Activated CD8-positive, alpha-beta memory T cell treated with anti-CD3 and anti-CD28 coated beads, Interleukin-2, amount 10 ng/mL, durations not matched to agents 7 days and 5 days (primary cell): ENCODE measurements at regions of chr12 and their contacts with region 1.

Region 1: GRCh38 chr12:4027412-4027811 is 154.2 kb upstream of the PARP11 start:
- DNase-seq: peak; percentile 72
- ATAC-seq: peak; percentile 44
- H3K4me3 Mint-ChIP-seq: no peak overlapping the region
- H3K27ac Mint-ChIP-seq: peak overlapping the region; percentile 31
- H3K4me1 Mint-ChIP-seq: peaks cover 29% of the 10 kb centered on the region
- H3K27me3 Mint-ChIP-seq: peaks cover 13% of the 10 kb centered on the region

Region 2: DNA sequence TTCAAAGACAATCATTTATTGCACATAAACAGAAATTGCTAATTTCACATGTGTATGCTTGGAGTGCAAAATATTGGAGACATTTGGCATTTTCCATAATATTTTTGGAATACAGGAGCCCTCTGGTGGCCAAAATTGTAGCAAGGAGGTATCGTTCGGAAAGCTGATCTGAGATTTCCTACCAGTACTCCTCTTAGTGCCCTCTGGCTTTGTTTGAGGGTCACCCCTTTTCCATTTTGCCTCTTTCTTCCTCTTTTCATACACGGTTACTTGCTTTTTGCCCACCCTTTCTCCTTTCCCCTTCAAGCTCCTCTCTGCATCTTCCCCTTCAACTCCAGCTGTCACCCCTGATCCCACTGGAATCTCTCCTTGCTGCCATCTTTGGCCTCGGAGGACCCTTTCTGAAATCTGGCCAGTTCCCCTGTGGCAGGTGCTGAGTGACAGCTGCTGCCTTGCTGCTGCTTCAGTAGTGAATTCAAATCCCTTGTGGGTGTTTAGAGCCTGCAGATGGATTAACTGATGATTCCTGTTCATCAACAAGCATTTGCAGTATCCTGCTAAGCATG is 10.4 kb after region 1 on chr12:
- CTCF ChIA-PET with region 1: interaction called, 11 read pairs
- DNase-seq: no peak
- ATAC-seq: no peak
- H3K4me3 Mint-ChIP-seq: no peak overlapping the region
- H3K27ac Mint-ChIP-seq: no peak overlapping the region
- H3K4me1 Mint-ChIP-seq: peaks cover 6% of the 10 kb centered on the region
- H3K27me3 Mint-ChIP-seq: peaks cover 26% of the 10 kb centered on the region